ENCODE measurements at regions of chr9 and their contacts with region 1.

Region 1: DNA sequence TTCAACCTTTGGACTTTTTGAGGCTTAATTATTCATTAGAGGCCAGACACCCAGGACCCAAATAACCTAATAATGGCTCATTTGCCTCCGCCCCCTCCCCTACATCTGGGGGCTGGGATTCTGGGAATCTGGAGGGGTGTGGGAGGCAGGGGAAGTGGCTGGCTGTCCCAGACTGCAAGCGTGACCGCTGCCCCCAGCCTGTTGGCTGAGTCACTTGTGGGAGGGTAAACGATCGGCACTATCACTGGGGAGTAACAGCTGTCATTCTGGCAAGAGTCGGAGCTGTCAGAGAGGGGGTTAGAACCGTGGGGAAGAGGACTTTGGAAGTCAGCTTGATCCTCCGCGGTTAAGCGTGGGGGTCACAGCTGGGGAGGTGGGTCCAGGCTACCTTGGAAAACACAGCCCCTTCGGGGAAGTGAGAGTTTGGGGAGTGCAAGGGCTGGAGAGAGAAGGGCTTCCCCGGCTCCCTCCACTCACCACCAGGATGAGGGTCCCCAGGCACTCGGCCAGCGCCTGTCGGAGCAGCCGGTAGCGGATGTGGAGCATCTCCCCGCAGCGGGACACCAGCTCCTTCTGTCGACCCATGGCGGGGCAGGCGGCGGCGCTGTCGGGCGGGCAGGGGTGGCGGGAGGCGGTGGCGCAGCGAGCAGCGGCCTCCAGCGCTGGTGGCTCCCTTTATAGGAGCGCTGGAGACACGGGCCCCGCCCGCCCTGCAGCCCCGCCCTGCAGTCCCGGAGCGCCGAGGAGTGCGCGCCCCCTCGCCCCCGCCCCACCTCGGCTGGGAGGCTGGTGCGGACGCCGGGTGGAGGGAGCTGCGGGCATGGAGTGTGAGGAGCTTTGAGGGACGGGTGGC is at the start of gene AQP3:
- DNase-seq: peak; percentile 41 to 73 (median 63)
- H3K4me3 ChIP-seq: peak within 1 kb of the TSS; percentile 9 to 73 (median 62)
- H3K27ac ChIP-seq: no peak within 1 kb of the TSS
- H3K4me1 ChIP-seq: peaks cover 3 to 42% (median 28%) of the 10 kb centered on the region in 4 experiments
- H3K27me3 ChIP-seq: peaks cover 0 to 6% (median 4%) of the 10 kb centered on the region in 5 experiments

Region 2: DNA sequence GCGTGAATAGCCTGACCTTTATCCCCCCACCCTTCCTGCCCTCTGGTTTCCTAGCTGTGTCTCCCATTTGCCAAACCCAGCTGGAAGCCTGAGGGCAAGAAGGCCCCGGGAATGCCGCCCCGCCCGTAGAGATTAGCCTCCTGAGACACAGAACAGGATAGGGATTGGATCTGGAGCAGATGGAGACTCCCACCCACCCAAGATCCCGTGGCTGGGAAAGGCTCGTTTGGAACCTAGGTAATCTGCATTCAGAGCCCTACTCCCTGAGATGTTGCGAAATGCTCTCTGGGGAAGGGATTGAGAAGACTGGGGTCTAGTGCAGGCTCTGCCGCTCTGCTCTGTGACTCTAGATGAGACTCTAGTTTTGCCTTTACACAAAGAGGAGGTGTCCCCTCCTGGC is 10.7 kb before region 1 on chr9:
- CTCF ChIA-PET with region 1: interaction called, 23 read pairs
- POLR2A ChIA-PET with region 1: interaction called, 4 read pairs
- DNase-seq: no peak
- H3K4me3 ChIP-seq: no peak overlapping the region
- H3K27ac ChIP-seq: no peak overlapping the region
- H3K4me1 ChIP-seq: peaks cover 0 to 7% (median 1%) of the 10 kb centered on the region in 4 experiments
- H3K27me3 ChIP-seq: no peaks in the 10 kb centered on the region